ENCODE measurements at regions of chr12 and their contacts with region 1.

Region 1: GRCh38 chr12:106841510-106842302 is 67.2 kb downstream of the RIC8B start:
- DNase-seq: peak; percentile 75
- H3K4me3 ChIP-seq: peak overlapping the region in 1 of 3 experiments; percentile 27
- H3K27ac ChIP-seq: peak overlapping the region; percentile 15
- H3K4me1 ChIP-seq: peaks cover 20% of the 10 kb centered on the region
- H3K27me3 ChIP-seq: no peaks in the 10 kb centered on the region
- CTCF ChIP-seq: peak; percentile 28 to 43
- POLR2A ChIP-seq: no peak

Region 2: GRCh38 chr12:106386813-106387535 is 454.7 kb before region 1 on chr12:
- CTCF ChIA-PET with region 1: interaction called, 28 read pairs
- POLR2A ChIA-PET with region 1: no interaction called
- dilution Hi-C with region 1: no loop called
- intact Hi-C with region 1: loop called (anchors 1 kb)
- DNase-seq: no peak
- H3K4me3 ChIP-seq: no peak overlapping the region
- H3K27ac ChIP-seq: no peak overlapping the region
- H3K4me1 ChIP-seq: no peaks in the 10 kb centered on the region
- H3K27me3 ChIP-seq: no peaks in the 10 kb centered on the region
- CTCF ChIP-seq: no peak
- POLR2A ChIP-seq: no peak

Region 3: DNA sequence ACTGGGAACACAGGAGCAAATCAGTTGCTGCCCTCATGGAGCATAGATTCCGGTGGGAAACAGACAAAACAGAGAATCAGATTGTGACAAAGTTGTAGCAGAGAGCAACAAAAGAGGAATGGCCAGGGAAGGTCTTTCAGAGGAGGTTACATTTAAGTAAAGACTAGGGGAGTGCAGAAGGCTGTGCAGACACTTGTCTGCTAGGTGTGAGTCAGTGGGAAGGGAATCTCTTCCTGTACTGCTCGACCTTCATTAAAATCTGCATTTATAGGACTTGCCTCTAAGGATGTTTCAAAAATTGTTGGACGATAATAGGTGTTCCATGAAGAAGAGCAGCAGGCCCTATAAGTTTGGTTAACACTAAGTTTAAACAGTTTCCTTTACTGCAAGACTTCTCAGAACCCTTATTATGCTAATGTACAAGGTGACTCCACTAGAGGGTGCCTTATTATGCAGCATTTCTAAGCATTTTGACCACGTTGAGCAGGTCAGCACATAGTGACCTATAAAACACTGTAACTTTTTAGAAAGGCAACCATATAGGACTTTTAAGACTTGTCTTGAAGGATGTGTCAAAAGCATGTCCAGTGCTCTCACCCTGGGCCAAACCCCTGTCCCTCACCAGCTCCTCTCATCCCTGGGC is 159.0 kb before region 1 on chr12:
- CTCF ChIA-PET with region 1: interaction called, 6 read pairs
- POLR2A ChIA-PET with region 1: no interaction called
- dilution Hi-C with region 1: no loop called
- intact Hi-C with region 1: loop called (anchors 1 kb)
- DNase-seq: peak; percentile 36
- H3K4me3 ChIP-seq: no peak overlapping the region
- H3K27ac ChIP-seq: no peak overlapping the region
- H3K4me1 ChIP-seq: no peaks in the 10 kb centered on the region
- H3K27me3 ChIP-seq: peaks cover 0 to 2% of the 10 kb centered on the region in 2 experiments
- CTCF ChIP-seq: peak in 1 of 2 donors; percentile 37
- POLR2A ChIP-seq: no peak

Region 4: GRCh38 chr12:106774005-106774807 is 67.5 kb before region 1 on chr12 and contains the start of gene RIC8B:
- CTCF ChIA-PET with region 1: no interaction called
- POLR2A ChIA-PET with region 1: no interaction called
- dilution Hi-C with region 1: no loop called
- intact Hi-C with region 1: loop called (anchors 1 kb)
- DNase-seq: peak; percentile 99
- H3K4me3 ChIP-seq: peak within 1 kb of the TSS; percentile 52 to 84 (median 74)
- H3K27ac ChIP-seq: peak within 1 kb of the TSS; percentile 91
- H3K4me1 ChIP-seq: peaks cover 12% of the 10 kb centered on the region
- H3K27me3 ChIP-seq: no peaks in the 10 kb centered on the region
- CTCF ChIP-seq: peak in 1 of 2 donors; percentile 2
- POLR2A ChIP-seq: peak; percentile 91
- total RNA-seq, gene RIC8B: 13.7 and 16.5 TPM in 2 replicates

Region 5: DNA sequence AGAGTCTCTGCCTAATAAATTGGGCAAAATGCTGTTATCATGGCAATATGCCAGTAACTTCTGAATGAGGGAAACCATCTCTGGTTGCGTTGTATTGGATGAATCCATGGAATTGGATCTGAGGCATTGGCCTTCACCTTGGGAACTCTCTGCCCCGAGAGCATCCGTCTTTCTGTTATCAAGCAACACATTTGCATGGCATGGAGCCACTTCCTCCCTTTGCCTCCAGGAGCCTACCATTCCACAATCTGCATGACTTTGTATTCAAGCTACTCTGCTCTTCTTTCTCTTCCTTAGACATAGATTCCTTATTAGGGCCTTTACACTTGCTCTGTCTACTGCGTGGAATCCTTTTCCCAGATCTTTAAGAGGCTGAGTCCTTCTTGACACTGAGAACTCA is 10.0 kb before region 1 on chr12:
- CTCF ChIA-PET with region 1: interaction called, 17 read pairs
- POLR2A ChIA-PET with region 1: no interaction called
- dilution Hi-C with region 1: no loop called
- intact Hi-C with region 1: no loop called
- DNase-seq: no peak
- H3K4me3 ChIP-seq: no peak overlapping the region
- H3K27ac ChIP-seq: no peak overlapping the region
- H3K4me1 ChIP-seq: no peaks in the 10 kb centered on the region
- H3K27me3 ChIP-seq: no peaks in the 10 kb centered on the region
- CTCF ChIP-seq: no peak
- POLR2A ChIP-seq: no peak

Measured in endothelial cell of umbilical vein (primary cell).